AG04450 (cell line): ENCODE measurements at regions of chr12 and their contacts with region 1.

Region 1: GRCh38 chr12:26701604-26702215 is 131.3 kb downstream of the ITPR2 start:
- DNase-seq: no peak
- H3K4me3 ChIP-seq: no peak overlapping the region
- H3K27ac ChIP-seq: no peak overlapping the region
- H3K27me3 ChIP-seq: no peaks in the 10 kb centered on the region
- CTCF ChIP-seq: peak; percentile 64

Region 2: DNA sequence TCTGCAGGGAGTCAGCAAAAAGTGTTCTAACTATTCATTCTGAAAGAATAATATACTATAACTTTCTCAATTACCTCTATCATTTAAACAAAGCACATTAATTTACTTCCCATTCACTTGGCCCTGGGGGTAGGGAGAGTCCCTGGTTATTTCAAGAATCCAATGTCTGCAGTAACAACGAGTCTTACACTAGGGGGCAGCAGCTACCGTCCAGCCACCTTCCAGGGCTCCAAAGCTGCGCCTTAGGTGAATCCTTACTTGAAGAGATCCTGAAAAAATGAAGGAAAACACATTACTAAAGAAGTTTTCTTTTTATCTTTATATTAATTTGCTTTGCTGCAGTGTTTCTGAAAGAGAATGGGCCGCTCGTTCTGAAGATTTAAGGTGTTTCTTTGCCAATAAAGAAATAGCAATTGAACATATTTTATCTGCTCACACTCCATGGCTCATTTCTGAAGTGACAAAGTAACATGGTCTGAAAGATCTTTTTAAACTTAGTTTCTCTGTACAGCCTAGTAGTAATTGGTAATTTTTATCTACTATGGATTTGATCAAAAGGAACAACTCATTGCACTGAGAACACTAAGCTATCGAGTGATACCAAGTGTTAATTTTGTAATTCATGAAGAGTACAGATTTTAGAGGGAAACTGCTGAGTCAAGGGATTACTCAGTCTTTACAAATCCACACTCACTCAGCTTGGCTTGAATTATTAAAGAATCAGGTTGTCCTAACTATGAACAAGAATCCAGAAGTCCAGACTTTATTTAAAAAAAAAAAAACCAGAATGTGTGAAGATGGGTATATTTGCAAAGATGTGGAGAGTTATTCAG is 604.4 kb before region 1 on chr12:
- CTCF ChIA-PET with region 1: interaction called, 16 read pairs
- POLR2A ChIA-PET with region 1: no interaction called
- DNase-seq: peak; percentile 58
- H3K4me3 ChIP-seq: no peak overlapping the region
- H3K27ac ChIP-seq: no peak overlapping the region
- H3K27me3 ChIP-seq: no peaks in the 10 kb centered on the region
- CTCF ChIP-seq: peak; percentile 97

Region 3: GRCh38 chr12:26566675-26567074 is 135.0 kb before region 1 on chr12:
- CTCF ChIA-PET with region 1: no interaction called
- POLR2A ChIA-PET with region 1: no interaction called
- DNase-seq: no peak
- H3K4me3 ChIP-seq: no peak overlapping the region
- H3K27ac ChIP-seq: no peak overlapping the region
- H3K27me3 ChIP-seq: no peaks in the 10 kb centered on the region
- CTCF ChIP-seq: no peak

Region 4: GRCh38 chr12:26629864-26630263 is 71.8 kb before region 1 on chr12:
- CTCF ChIA-PET with region 1: interaction called, 25 read pairs
- POLR2A ChIA-PET with region 1: interaction called, 3 read pairs
- DNase-seq: no peak
- H3K4me3 ChIP-seq: peak overlapping the region; percentile 7; the same call in 1 of the 2 replicates
- H3K27ac ChIP-seq: no peak overlapping the region
- H3K27me3 ChIP-seq: no peaks in the 10 kb centered on the region
- CTCF ChIP-seq: peak; percentile 69

Region 5: DNA sequence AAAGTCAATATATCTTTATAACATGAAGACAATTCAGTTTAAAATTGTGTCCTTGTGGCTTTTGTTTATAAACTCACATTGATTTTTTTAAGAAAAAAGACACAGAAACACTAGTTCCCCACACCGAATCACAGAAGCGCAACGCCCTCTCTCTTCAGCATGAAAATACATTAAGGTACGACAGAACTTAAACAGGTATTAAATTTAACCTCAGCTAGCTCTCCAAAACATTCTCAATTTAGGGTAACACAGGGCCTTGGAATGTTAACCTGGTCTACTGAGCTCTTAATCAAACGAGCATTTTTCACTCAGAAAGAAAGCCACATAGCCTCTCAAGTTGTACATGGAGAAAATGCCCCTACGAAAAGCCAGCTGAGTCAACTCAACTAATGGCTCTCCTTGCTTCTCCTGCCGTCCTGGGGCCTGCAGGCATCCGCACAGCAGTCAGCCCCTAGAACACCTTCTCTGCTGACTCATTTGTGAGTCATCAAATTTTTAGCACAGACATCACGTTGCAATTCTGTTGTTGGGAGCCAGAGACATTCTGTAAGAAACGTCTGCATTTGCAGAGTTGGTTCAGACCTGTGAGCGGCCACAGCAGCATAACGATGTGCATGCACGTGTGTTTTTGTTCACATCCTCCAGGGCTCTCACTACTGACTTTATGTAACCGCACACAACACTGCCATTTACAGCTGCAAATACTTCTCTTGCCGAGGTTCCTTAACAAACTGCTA is 10.3 kb before region 1 on chr12:
- CTCF ChIA-PET with region 1: interaction called, 20 read pairs
- POLR2A ChIA-PET with region 1: no interaction called
- DNase-seq: peak; percentile 92
- H3K4me3 ChIP-seq: no peak overlapping the region
- H3K27ac ChIP-seq: peak overlapping the region; percentile 40
- H3K27me3 ChIP-seq: no peaks in the 10 kb centered on the region
- CTCF ChIP-seq: no peak

Region 6: GRCh38 chr12:26719852-26720251 is 18.1 kb after region 1 on chr12:
- CTCF ChIA-PET with region 1: interaction called, 27 read pairs
- POLR2A ChIA-PET with region 1: no interaction called
- DNase-seq: no peak
- H3K4me3 ChIP-seq: no peak overlapping the region
- H3K27ac ChIP-seq: no peak overlapping the region
- H3K27me3 ChIP-seq: no peaks in the 10 kb centered on the region
- CTCF ChIP-seq: peak; percentile 51